CD8-positive, alpha-beta T cell (primary cell): ENCODE measurements at regions of chr22 and their contacts with region 1.

Region 1: DNA sequence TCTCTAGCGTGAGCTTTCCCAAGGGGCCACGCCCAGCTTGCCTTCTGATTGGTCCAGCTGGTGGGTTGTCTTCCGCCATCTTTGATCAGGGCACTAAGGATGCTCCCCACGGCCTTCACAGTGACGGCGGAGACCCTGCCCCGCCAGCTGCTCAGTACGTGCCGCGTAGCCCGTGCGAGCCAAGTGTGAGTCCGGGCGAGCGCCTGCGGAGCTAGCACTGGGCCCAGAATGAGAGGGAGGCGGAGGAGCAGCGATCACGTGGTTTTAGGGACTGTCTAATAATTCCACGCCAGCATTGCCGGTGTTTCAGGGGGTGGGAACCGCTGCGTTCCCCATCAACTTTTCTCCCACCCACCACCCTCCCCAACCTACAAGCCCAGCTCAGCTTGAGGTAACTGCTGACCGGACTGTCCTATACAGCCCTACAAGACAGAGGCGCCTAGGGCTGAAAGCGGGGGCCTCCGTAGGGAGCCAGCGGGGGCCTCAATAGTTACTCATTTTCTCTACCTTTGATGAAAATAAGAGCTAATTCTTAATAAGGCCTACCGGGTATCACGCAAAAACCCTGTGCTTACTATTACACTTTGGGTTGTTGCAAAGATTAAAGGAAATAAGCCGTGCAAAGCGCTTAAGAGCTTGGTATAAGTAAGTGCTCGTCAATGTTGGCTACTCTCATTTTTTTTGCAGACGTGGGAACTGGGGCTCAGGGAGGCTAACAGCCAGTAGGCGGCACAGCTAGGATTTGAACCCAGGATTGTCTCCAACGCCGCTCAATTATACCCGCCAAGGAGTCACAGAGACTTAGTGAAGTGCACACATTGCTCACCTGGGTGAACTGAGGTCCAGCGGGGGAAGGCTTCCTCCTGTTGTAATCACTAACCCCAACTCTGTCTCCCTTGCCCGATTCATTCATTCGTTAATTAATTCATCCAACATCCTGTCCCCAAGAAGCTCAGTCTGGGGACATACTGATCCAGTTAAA is 1.3 kb upstream of the MTFP1 start:
- DNase-seq: peak; percentile 94 to 100 (median 98)
- ATAC-seq: peak; percentile 76
- H3K4me3 ChIP-seq: peak overlapping the region; percentile 64 to 69
- H3K4me3 Mint-ChIP-seq: peak overlapping the region; percentile 93
- H3K27ac ChIP-seq: peak overlapping the region; percentile 89 to 91
- H3K27ac Mint-ChIP-seq: peak overlapping the region; percentile 97
- H3K4me1 ChIP-seq: peaks cover 41% of the 10 kb centered on the region
- H3K4me1 Mint-ChIP-seq: peaks cover 63% of the 10 kb centered on the region
- H3K27me3 ChIP-seq: no peaks in the 10 kb centered on the region
- H3K27me3 Mint-ChIP-seq: no peaks in the 10 kb centered on the region
- CTCF ChIP-seq: no peak

Region 2: DNA sequence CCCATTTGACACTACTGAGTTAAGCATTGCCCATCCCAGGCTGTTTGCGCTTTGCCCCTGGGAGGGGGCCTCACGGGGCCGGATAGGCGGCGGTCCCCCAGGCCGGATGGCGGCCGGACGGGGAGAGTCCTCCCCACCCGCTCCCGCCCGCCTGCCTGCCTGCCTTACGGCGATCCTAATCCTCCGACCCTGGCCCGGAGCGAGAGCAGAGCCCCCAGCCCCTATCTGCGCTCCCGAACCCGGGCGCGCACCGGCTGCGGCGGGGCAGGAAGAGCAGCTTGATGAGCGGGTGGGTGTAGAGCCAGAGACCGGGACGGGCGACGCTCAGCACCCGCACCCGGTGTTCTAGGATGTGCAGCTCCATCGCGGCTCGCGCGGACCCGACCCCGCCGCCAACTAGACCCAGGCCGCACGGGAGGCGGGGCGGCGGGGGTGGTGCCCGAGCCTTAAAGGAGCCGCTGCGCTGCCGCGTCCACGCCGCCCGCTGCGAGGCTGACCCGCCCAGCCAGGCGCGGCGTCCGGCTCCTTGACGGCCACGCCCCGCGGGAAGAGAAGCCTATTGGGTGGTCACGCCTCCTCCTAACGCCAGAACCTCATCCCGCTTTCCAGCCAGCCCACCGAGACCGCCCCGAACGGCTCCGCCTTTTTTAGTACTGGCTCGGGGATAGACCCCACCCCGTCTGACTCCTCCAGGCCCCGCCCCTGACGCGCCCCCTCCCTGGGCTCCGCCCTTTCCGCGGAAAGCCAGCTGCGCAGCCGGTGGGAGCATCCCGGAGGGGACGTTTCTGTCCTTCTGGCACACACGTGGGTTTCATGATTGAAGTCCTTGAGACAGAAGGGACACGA is 134.9 kb before region 1 on chr22 and contains the start of gene CASTOR1:
- CTCF ChIA-PET with region 1: interaction called, 34 read pairs
- POLR2A ChIA-PET with region 1: interaction called, 28 read pairs
- intact Hi-C with region 1: loop called (anchors 1 kb)
- DNase-seq: peak; percentile 67 to 93 (median 91)
- ATAC-seq: peak; percentile 82
- H3K4me3 ChIP-seq: peak within 1 kb of the TSS; percentile 72 to 76
- H3K4me3 Mint-ChIP-seq: peak within 1 kb of the TSS; percentile 90
- H3K27ac ChIP-seq: peak within 1 kb of the TSS; percentile 44 to 71
- H3K27ac Mint-ChIP-seq: peak within 1 kb of the TSS; percentile 84
- H3K4me1 ChIP-seq: peaks cover 34% of the 10 kb centered on the region
- H3K4me1 Mint-ChIP-seq: peaks cover 45% of the 10 kb centered on the region
- H3K27me3 ChIP-seq: no peaks in the 10 kb centered on the region
- H3K27me3 Mint-ChIP-seq: no peaks in the 10 kb centered on the region
- CTCF ChIP-seq: no peak
- total RNA-seq, gene CASTOR1: 17.2 to 21.9 TPM

Region 3: DNA sequence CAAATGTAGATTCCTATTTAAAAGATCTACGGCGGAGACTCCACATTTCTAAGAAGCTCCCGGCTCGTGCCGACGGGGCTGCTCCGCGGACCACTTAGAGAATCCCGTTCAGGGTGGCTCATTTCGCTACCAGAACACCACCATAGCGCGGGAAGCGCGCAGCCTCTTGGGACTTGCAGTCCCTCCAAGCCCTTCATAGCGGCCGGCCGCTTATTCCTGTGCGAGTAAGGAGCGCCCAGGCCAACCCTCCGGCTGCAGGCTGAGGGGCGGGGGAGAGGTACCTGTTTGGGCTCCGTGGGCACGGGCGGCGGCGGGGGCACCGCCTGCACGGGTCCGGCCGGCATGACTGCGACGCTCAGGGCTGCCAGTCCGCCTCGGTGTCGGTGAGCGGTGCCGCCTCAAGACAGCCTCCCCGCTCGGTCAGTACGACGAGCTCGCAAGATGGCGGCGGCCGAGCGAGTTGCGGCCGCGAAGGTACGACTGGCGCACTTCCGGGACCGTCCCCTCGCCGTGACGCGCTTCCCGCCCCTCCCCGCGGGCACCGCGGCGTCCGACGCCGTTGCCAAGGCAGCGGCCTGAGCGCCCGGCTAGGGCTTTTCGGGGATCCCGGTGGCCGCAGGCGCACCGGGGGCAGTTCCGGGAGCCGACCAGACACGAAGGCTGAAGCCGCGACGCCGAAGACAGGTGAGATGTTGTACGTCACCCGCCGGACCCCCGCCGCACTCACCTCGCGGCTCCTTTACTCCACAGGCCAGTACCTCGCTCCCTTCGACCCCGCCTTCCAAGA is 67.6 kb before region 1 on chr22 and contains the starts of genes CCDC157 and SF3A1:
- CTCF ChIA-PET with region 1: interaction called, 3 read pairs
- POLR2A ChIA-PET with region 1: interaction called, 10 read pairs
- intact Hi-C with region 1: loop called (anchors 2 kb)
- DNase-seq: peak; percentile 74 to 96 (median 87)
- ATAC-seq: peak; percentile 83
- H3K4me3 ChIP-seq: peak within 1 kb of the TSS; percentile 73 to 94
- H3K4me3 Mint-ChIP-seq: peak within 1 kb of the TSS; percentile 92
- H3K27ac ChIP-seq: peak within 1 kb of the TSS; percentile 93 to 99
- H3K27ac Mint-ChIP-seq: peak within 1 kb of the TSS; percentile 93
- H3K4me1 ChIP-seq: peaks cover 44% of the 10 kb centered on the region
- H3K4me1 Mint-ChIP-seq: peaks cover 48% of the 10 kb centered on the region
- H3K27me3 ChIP-seq: no peaks in the 10 kb centered on the region
- H3K27me3 Mint-ChIP-seq: no peaks in the 10 kb centered on the region
- CTCF ChIP-seq: no peak
- total RNA-seq, gene CCDC157: 8.7 to 11.7 TPM
- total RNA-seq, gene SF3A1: 406 to 422 TPM

Region 4: GRCh38 chr22:30402028-30402765 is 22.1 kb before region 1 on chr22:
- CTCF ChIA-PET with region 1: interaction called, 210 read pairs
- POLR2A ChIA-PET with region 1: interaction called, 64 read pairs
- intact Hi-C with region 1: loop called in 1 of 2 experiments (anchors 1 kb)
- DNase-seq: peak in 1 of 9 experiments; percentile 17
- ATAC-seq: no peak
- H3K4me3 ChIP-seq: no peak overlapping the region
- H3K4me3 Mint-ChIP-seq: no peak overlapping the region
- H3K27ac ChIP-seq: no peak overlapping the region
- H3K27ac Mint-ChIP-seq: no peak overlapping the region
- H3K4me1 ChIP-seq: peaks cover 20% of the 10 kb centered on the region
- H3K4me1 Mint-ChIP-seq: peaks cover 39% of the 10 kb centered on the region
- H3K27me3 ChIP-seq: peaks cover 0 to 7% of the 10 kb centered on the region in 2 experiments
- H3K27me3 Mint-ChIP-seq: no peaks in the 10 kb centered on the region
- CTCF ChIP-seq: no peak

Region 5: DNA sequence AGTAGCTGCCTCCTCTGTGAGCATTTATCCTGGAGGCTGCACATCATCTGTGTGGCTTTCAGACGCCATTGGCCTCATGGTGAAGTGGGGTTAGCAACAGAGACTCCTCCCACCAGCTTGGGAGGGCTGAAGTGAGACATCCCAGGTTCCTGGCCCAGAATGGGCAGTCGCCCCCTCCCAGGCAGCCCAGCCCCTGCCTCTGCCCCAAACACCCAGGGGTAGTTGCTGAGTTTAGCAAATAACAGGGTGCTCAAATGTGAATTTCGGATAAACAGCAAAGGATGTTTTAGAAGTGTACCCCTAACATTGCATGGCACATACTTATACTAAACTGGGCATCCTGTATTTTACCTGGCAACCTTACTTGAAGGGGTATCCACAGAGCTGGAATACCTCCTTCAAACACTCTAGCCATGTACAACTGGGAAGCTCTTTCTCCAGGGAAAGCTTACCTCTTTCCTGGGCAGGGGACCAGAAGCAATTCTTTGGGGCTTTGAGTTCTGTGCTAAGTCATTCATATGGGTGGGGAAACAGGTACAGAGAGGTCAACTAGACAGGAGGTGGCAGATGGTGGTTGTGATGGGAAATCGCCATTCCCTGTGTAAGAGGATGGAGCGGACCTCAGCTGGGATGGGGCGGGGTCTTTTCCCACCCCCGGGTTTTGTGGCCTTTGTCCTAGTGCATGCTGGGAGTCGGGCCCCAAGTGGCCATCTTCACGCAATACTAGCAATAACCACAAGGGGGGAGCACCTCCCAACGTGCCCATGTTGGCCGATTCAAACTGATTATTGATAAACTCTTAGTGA is 20.6 kb after region 1 on chr22:
- CTCF ChIA-PET with region 1: interaction called, 15 read pairs
- POLR2A ChIA-PET with region 1: no interaction called
- intact Hi-C with region 1: no loop called
- DNase-seq: peak in 5 of 9 experiments; percentile 37 to 74 (median 51)
- ATAC-seq: peak; percentile 51
- H3K4me3 ChIP-seq: no peak overlapping the region
- H3K4me3 Mint-ChIP-seq: no peak overlapping the region
- H3K27ac ChIP-seq: no peak overlapping the region
- H3K27ac Mint-ChIP-seq: no peak overlapping the region
- H3K4me1 ChIP-seq: peaks cover 10% of the 10 kb centered on the region
- H3K4me1 Mint-ChIP-seq: peaks cover 14% of the 10 kb centered on the region
- H3K27me3 ChIP-seq: peaks cover 3 to 16% of the 10 kb centered on the region in 2 experiments
- H3K27me3 Mint-ChIP-seq: peaks cover 55% of the 10 kb centered on the region
- CTCF ChIP-seq: peak; percentile 74

Region 6: DNA sequence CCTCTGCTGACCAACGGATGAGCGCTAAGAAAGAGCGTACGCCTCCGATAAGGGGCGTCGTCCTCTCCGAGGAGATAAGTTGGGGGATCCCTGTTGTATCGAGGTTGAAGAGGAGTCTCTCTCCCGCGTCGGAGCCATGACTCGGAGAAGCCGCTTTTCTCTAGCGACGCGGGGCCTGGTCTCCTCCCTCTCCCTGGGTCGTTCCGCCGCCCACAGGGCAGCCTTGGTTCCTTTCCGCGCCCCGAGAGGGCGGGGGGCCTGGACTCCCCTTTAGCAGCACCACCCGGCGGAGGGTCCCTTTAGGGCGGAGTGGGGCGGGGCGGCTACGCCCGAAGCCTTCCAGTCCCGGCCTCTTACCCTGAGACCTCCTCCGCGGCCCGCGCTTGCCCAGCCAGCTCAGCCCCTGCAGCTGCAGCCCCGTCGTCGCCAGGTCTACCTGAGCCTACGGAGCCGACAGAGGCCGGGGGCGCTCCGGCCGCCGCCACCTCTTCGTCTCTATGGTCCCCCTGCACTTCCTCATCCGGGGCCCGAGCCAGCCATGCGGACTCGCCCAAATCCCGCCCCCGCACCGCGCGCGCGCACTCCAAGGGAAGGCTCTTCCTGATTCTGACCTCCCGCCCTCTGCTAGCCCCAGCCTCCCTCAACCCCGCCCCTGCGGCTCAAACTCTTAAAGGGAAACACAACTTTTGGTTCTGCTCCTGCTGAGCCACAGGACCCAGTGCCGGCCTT is 1325.5 kb after region 1 on chr22 and contains the start of gene PRR14L:
- CTCF ChIA-PET with region 1: no interaction called
- POLR2A ChIA-PET with region 1: no interaction called
- intact Hi-C with region 1: loop called in 1 of 2 experiments (anchors 5 kb)
- DNase-seq: peak; percentile 96 to 100 (median 99)
- ATAC-seq: peak; percentile 75
- H3K4me3 ChIP-seq: peak within 1 kb of the TSS; percentile 84 to 90
- H3K4me3 Mint-ChIP-seq: peak within 1 kb of the TSS; percentile 98
- H3K27ac ChIP-seq: peak within 1 kb of the TSS; percentile 79 to 84
- H3K27ac Mint-ChIP-seq: peak within 1 kb of the TSS; percentile 97
- H3K4me1 ChIP-seq: peaks cover 40% of the 10 kb centered on the region
- H3K4me1 Mint-ChIP-seq: peaks cover 53% of the 10 kb centered on the region
- H3K27me3 ChIP-seq: no peaks in the 10 kb centered on the region
- H3K27me3 Mint-ChIP-seq: no peaks in the 10 kb centered on the region
- CTCF ChIP-seq: no peak
- total RNA-seq, gene PRR14L: 17.8 to 21.2 TPM